ENCODE measurements at regions of chr9 and their contacts with region 1.

Region 1: GRCh38 chr9:27427273-27427645 is 96.8 kb upstream of the IFNK start:
- DNase-seq: no peak
- ATAC-seq: peak; percentile 64 to 87 (median 68)
- H3K4me3 ChIP-seq: no peak overlapping the region
- H3K27ac ChIP-seq: no peak overlapping the region
- H3K4me1 ChIP-seq: peaks cover 15% of the 10 kb centered on the region
- H3K27me3 ChIP-seq: no peaks in the 10 kb centered on the region
- CTCF ChIP-seq: no peak

Region 2: GRCh38 chr9:27094640-27095298 is 332.5 kb before region 1 on chr9:
- intact Hi-C with region 1: no loop called
- DNase-seq: no peak
- ATAC-seq: peak in 1 of 4 donors; percentile 33
- H3K4me3 ChIP-seq: no peak overlapping the region
- H3K27ac ChIP-seq: no peak overlapping the region
- H3K4me1 ChIP-seq: no peaks in the 10 kb centered on the region
- H3K27me3 ChIP-seq: no peaks in the 10 kb centered on the region
- CTCF ChIP-seq: no peak

Region 3: GRCh38 chr9:27371382-27371781 is 55.9 kb before region 1 on chr9:
- intact Hi-C with region 1: loop called in 1 of 2 experiments (anchors 5 kb)
- DNase-seq: no peak
- ATAC-seq: peak; percentile 79 to 88 (median 86)
- H3K4me3 ChIP-seq: peak overlapping the region; percentile 50
- H3K27ac ChIP-seq: peak overlapping the region; percentile 34
- H3K4me1 ChIP-seq: peaks cover 48% of the 10 kb centered on the region
- H3K27me3 ChIP-seq: no peaks in the 10 kb centered on the region
- CTCF ChIP-seq: no peak

Region 4: GRCh38 chr9:27383524-27383923 is 43.7 kb before region 1 on chr9:
- intact Hi-C with region 1: no loop called
- DNase-seq: no peak
- ATAC-seq: no peak
- H3K4me3 ChIP-seq: no peak overlapping the region
- H3K27ac ChIP-seq: no peak overlapping the region
- H3K4me1 ChIP-seq: no peaks in the 10 kb centered on the region
- H3K27me3 ChIP-seq: no peaks in the 10 kb centered on the region
- CTCF ChIP-seq: no peak

Region 5: DNA sequence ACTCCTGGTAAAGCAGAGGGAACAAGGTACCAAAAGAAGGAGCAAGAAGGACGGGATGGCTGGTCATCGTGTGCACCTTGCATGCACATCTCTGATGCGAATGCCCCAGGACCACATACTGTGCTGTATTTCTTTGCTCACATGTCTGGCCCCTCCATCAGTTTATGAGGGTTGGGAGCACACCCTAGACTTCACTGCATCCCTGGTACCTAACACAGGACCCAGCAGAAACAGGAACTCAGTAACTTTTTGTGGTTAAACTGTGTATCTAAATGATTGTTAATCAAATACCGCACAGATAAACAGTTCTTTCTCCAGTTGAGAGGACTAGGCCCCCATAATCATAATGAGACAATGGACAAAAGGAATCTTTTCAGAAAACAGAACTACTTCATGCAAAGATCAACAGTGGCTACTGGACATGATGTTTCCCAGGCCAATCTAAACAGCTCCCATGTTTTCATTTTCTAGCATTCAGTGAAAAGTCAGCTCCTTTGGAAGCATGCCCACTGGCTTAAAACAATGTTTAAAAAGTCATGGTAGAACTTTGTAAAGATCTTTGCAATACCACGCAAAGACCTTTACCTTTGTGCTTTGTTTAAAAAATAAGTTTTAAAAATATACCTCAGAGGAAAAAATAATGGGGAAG is 41.3 kb after region 1 on chr9:
- intact Hi-C with region 1: no loop called
- DNase-seq: no peak
- ATAC-seq: no peak
- H3K4me3 ChIP-seq: no peak overlapping the region
- H3K27ac ChIP-seq: no peak overlapping the region
- H3K4me1 ChIP-seq: peaks cover 13% of the 10 kb centered on the region
- H3K27me3 ChIP-seq: no peaks in the 10 kb centered on the region
- CTCF ChIP-seq: no peak